Posterior vena cava (tissue), 2 donors: ENCODE measurements at regions of chr21 and their contacts with region 1.

Region 1: DNA sequence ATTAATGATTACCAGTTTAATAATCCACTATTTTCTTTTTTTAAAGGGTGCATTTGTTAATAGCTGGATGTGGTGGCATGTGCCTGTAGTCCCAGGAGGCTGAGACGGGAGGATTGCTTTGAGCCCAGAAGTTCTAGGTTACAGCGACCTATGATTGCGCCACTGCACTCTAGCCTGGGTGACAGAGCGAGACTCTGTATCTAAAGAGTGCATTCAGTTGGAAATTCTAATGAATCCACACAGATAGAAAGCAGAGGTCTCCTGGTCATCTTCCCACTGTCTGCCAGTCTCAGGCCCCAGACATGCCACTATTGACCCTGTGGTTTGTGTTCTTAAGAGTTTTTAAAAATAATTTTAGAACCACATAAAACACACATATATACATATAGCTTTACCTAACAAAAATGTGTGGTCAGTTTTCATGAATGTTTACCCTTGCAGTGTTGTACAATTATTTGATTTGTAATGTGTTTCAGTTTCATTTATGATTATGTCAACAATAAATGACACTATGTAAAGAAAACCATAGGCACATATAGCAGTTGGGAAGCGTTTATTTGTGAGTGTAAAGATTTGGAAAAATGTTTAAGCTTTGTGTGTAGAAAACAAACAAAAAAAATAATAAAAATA is 17.0 kb downstream of the CHAF1B start:
- DNase-seq: peak; percentile 43

Region 2: DNA sequence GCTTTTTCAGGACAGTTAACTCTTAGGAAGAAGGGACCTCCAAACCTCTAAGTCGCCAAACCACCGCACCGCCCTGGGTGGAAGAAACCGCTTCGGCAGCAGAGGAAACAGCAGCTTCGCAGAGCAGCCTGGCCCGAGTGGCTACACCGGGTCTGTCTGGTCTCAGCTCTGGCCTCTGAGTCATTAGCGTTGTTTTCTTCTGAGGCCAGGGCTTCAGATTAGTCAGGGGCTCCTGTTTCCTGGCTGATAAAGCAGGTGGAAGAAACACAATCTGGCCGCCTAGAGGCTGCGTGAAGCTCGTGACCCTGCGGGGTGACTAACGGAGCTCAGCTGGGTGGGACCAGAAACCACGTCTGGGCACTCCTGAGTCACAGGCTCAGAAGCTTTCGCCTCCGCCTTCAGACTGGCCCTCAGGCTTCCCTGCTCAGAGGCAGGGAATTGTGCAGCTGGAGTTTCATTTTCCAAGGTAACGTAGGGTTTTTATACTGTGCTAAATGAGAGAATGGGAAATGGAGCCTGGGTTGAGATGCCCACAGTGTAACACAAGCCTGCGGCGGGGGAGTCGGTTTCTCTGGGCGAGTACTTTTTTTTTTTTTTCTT is 27.8 kb after region 1 on chr21:
- intact Hi-C with region 1: loop called in 1 of 2 experiments (anchors 1 kb)
- DNase-seq: peak; percentile 95